ENCODE measurements at regions of chr14 and their contacts with region 1.

Region 1: DNA sequence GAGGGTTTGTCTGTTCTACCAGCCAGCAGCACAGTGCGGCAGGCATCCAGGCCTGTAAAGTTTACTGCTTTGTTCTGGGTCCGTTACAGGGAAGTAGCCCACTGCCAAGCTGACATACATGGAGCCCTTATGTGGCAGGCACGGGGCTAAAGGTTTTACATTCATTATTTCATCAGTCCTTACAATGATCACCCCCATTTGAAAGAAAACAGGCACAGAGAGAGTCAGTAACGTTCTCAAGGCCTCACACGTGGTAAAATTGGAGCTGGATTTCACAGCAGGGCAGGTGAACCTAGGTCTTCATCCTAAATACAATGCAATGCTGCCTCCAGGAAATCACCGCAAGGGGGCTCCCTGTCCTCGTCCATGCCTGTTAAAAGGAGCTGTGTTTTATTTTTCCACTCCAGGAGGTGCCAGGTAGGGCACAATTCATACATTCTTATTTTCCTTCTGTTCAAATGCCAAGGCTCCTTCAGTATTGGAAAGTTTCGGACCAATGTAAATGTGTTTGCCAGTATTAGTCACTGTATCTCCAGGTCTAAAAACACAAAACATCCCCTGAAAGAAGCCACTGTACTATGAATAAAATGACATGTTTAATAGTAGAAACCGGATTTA is 172.2 kb upstream of the GZMB start:
- DNase-seq: peak; percentile 87
- ATAC-seq: peak; percentile 91
- H3K4me3 Mint-ChIP-seq: no peak overlapping the region
- H3K27ac Mint-ChIP-seq: no peak overlapping the region
- H3K4me1 Mint-ChIP-seq: peaks cover 7% of the 10 kb centered on the region
- H3K27me3 Mint-ChIP-seq: no peaks in the 10 kb centered on the region
- CTCF ChIP-seq: peak; percentile 84

Region 2: GRCh38 chr14:24678801-24679247 is 127.3 kb before region 1 on chr14:
- CTCF ChIA-PET with region 1: no interaction called
- POLR2A ChIA-PET with region 1: no interaction called
- DNase-seq: peak; percentile 72
- ATAC-seq: peak; percentile 98
- H3K4me3 Mint-ChIP-seq: peak overlapping the region; percentile 55
- H3K27ac Mint-ChIP-seq: no peak overlapping the region
- H3K4me1 Mint-ChIP-seq: peaks cover 3% of the 10 kb centered on the region
- H3K27me3 Mint-ChIP-seq: peaks cover 19% of the 10 kb centered on the region
- CTCF ChIP-seq: peak; percentile 92

Region 3: GRCh38 chr14:24710403-24711112 is 95.6 kb before region 1 on chr14:
- CTCF ChIA-PET with region 1: interaction called, 32 read pairs
- POLR2A ChIA-PET with region 1: no interaction called
- DNase-seq: peak; percentile 68
- ATAC-seq: peak; percentile 73
- H3K4me3 Mint-ChIP-seq: no peak overlapping the region
- H3K27ac Mint-ChIP-seq: no peak overlapping the region
- H3K4me1 Mint-ChIP-seq: peaks cover 14% of the 10 kb centered on the region
- H3K27me3 Mint-ChIP-seq: no peaks in the 10 kb centered on the region
- CTCF ChIP-seq: peak; percentile 38; the same call in 1 of the 2 replicates

Region 4: DNA sequence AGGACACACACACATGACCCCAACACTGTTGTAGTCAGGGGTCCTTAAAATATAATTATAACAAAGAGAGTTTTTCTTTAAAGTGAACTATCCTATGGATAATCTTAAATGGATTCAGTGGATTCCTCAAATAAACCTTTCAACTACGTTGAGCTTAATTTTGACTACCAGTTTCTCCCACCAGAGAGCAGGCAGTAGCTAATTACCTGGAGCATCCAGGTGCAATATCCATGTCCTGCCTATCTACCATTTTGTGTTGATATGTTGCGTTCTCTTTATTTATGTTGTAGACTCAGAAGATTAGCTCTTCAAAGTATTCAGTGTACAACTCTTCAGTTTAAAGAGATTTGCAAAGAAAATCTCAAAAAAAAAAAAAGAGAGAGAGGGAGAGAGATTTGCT is 45.0 kb before region 1 on chr14:
- CTCF ChIA-PET with region 1: interaction called, 14 read pairs
- POLR2A ChIA-PET with region 1: no interaction called
- DNase-seq: no peak
- ATAC-seq: no peak
- H3K4me3 Mint-ChIP-seq: no peak overlapping the region
- H3K27ac Mint-ChIP-seq: no peak overlapping the region
- H3K4me1 Mint-ChIP-seq: no peaks in the 10 kb centered on the region
- H3K27me3 Mint-ChIP-seq: no peaks in the 10 kb centered on the region; the same call in none of the 2 replicates
- CTCF ChIP-seq: no peak

Region 5: DNA sequence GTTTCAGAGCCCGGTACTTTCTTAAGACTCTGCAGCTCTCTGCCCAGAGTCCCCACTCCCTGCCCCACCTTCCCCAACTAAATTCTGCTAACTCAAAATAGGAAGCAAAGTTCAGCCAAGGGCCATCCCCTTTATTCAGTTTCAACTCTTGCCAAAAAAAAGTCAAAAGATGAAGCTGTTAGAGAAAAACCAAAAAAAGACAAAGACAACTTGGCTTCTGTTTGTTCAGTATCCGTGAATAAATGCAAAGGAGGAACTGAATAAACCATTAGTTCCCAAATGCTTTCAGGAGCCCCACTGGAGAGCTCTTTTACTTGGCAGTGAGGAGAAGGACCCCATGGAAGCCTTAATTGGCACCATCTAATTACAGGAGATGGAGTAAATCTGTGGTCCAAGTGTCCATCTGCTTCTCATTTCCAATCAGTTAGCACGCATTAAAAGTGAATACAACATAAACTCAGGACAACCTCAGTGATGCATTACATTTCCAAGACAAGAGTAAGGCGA is 16.7 kb before region 1 on chr14:
- CTCF ChIA-PET with region 1: interaction called, 13 read pairs
- POLR2A ChIA-PET with region 1: no interaction called
- DNase-seq: no peak
- ATAC-seq: no peak
- H3K4me3 Mint-ChIP-seq: no peak overlapping the region
- H3K27ac Mint-ChIP-seq: no peak overlapping the region
- H3K4me1 Mint-ChIP-seq: peaks cover 5% of the 10 kb centered on the region; the same call in 1 of the 2 replicates
- H3K27me3 Mint-ChIP-seq: peaks cover 3% of the 10 kb centered on the region; the same call in 1 of the 2 replicates
- CTCF ChIP-seq: no peak

Region 6: GRCh38 chr14:24831677-24832076 is 25.5 kb after region 1 on chr14:
- CTCF ChIA-PET with region 1: no interaction called
- POLR2A ChIA-PET with region 1: no interaction called
- DNase-seq: no peak
- ATAC-seq: no peak
- H3K4me3 Mint-ChIP-seq: no peak overlapping the region
- H3K27ac Mint-ChIP-seq: no peak overlapping the region
- H3K4me1 Mint-ChIP-seq: no peaks in the 10 kb centered on the region
- H3K27me3 Mint-ChIP-seq: no peaks in the 10 kb centered on the region
- CTCF ChIP-seq: no peak

Region 7: GRCh38 chr14:24880689-24881088 is 74.5 kb after region 1 on chr14:
- CTCF ChIA-PET with region 1: no interaction called
- POLR2A ChIA-PET with region 1: no interaction called
- DNase-seq: no peak
- ATAC-seq: no peak
- H3K4me3 Mint-ChIP-seq: no peak overlapping the region
- H3K27ac Mint-ChIP-seq: no peak overlapping the region
- H3K4me1 Mint-ChIP-seq: peaks cover 3% of the 10 kb centered on the region
- H3K27me3 Mint-ChIP-seq: no peaks in the 10 kb centered on the region
- CTCF ChIP-seq: no peak

Region 8: DNA sequence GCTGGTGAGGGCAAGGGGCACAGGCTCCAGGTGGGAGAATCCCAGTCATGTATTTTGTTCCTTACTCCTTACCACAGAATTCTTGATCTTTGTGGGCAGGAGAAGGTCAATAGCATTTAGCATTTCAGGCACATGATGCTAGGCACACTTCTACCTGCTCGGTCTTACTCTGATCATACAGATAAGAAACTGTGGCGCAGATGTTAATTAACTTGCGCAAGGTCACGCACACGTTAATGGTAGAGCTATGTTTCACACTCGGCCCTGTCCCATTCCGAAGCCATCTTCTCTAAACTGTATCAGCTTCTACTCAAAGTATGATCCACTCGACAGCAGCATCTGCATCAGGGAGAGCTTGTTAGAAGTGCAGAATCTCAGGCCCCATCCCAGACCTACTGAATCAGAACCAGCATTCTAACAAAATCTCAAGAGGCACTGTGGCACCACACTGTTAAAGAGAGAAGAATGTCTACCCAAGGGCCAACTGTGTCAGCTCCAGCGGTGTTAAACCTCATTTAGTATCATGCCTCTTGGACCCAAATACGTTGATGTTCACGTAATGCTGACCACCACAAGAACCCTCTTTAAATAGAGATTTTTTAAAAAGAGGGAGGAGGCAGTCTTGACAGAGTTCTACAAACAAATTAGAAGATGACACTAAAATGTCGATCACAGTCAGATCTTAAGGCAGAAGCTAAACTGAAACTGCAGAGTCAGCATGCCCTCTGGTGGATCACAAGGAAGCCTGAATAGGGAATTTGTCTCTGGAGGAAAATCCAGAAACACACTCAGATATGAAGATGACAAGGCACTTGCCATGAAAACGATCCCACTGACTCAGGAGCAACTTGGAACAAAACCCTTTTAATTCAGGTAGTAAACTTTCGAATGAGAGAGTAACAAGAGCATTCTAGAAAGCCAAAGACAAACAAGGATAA is 236.5 kb after region 1 on chr14:
- CTCF ChIA-PET with region 1: interaction called, 83 read pairs
- POLR2A ChIA-PET with region 1: interaction called, 3 read pairs
- DNase-seq: peak; percentile 24
- ATAC-seq: peak; percentile 46; the same call in 1 of the 2 replicates
- H3K4me3 Mint-ChIP-seq: no peak overlapping the region
- H3K27ac Mint-ChIP-seq: peak overlapping the region; percentile 67; the same call in 1 of the 2 replicates
- H3K4me1 Mint-ChIP-seq: peaks cover 22% of the 10 kb centered on the region
- H3K27me3 Mint-ChIP-seq: peaks cover 9% of the 10 kb centered on the region
- CTCF ChIP-seq: no peak

Region 9: DNA sequence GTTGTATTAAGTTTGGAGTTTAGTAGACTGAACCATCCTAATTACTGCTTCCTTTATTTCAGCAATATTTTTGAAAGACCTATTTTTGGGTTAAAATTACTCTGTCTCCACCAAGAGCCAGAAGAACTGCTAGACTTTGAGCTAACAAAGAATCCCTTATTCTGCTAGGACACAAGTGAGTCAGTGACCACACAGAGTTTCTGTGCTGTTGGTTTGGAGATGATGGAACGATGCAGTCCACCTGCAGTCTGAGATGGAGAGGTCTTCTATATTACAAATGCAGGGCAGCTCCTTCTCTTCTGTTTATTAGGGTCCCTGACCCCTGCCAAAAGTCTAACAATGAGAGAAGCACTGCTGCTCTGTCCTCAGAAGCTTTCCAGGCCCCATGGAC is 250.5 kb after region 1 on chr14:
- CTCF ChIA-PET with region 1: interaction called, 14 read pairs
- POLR2A ChIA-PET with region 1: no interaction called
- DNase-seq: no peak
- ATAC-seq: no peak
- H3K4me3 Mint-ChIP-seq: no peak overlapping the region
- H3K27ac Mint-ChIP-seq: no peak overlapping the region
- H3K4me1 Mint-ChIP-seq: peaks cover 29% of the 10 kb centered on the region
- H3K27me3 Mint-ChIP-seq: peaks cover 11% of the 10 kb centered on the region
- CTCF ChIP-seq: no peak

Region 10: GRCh38 chr14:25237845-25238244 is 431.7 kb after region 1 on chr14:
- CTCF ChIA-PET with region 1: interaction called, 33 read pairs
- POLR2A ChIA-PET with region 1: no interaction called
- DNase-seq: peak; percentile 53
- ATAC-seq: peak; percentile 98
- H3K4me3 Mint-ChIP-seq: peak overlapping the region; percentile 33
- H3K27ac Mint-ChIP-seq: no peak overlapping the region
- H3K4me1 Mint-ChIP-seq: peaks cover 28% of the 10 kb centered on the region
- H3K27me3 Mint-ChIP-seq: peaks cover 4% of the 10 kb centered on the region; the same call in 1 of the 2 replicates
- CTCF ChIP-seq: no peak

Measured in WTC11 (cell line).